ENCODE measurements at regions of chr13 and their contacts with region 1.

Region 1: DNA sequence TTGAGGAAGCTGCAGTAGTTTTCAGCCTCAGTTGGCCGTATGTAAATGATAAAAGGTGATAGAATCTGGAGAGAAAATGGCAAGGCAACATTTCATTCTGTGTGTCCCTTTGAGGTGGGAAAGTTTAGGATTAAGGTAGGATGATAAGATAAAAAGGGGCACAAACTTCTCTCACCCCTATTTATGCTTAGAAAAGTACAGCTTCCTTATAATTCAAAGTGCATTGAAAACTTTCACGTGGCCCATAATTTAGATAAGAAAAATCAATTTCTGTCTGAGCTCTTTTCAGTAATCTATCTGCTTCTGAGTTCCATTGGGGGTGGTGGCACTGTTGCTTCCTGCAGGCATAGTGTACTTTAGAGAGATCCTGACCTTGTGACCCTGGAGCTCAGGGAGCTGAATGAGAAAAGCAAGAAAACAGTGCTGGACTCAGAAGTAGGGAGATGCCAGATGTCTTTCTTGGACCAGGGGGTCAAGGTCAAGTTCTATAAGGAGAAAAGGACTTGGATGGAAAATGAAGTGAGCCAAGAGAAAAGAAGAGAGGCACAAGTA is 187.3 kb downstream of the NDFIP2 start:
- DNase-seq: no peak
- ATAC-seq: no peak
- H3K4me3 Mint-ChIP-seq: no peak overlapping the region
- H3K27ac Mint-ChIP-seq: no peak overlapping the region
- H3K4me1 Mint-ChIP-seq: no peaks in the 10 kb centered on the region
- H3K27me3 Mint-ChIP-seq: no peaks in the 10 kb centered on the region

Region 2: GRCh38 chr13:79679334-79679733 is 11.1 kb after region 1 on chr13:
- CTCF ChIA-PET with region 1: interaction called, 34 read pairs
- POLR2A ChIA-PET with region 1: no interaction called
- DNase-seq: peak; percentile 63
- ATAC-seq: peak; percentile 53
- H3K4me3 Mint-ChIP-seq: no peak overlapping the region
- H3K27ac Mint-ChIP-seq: no peak overlapping the region
- H3K4me1 Mint-ChIP-seq: no peaks in the 10 kb centered on the region
- H3K27me3 Mint-ChIP-seq: peaks cover 3% of the 10 kb centered on the region

Measured in activated CD8-positive, alpha-beta T cell treated with anti-CD3 and anti-CD28 coated beads, Interleukin-2, amount 10 ng/mL, durations not matched to agents 7 days and 5 days (primary cell).